CD4-positive, alpha-beta T cell (primary cell): ENCODE measurements at regions of chr6 and their contacts with region 1.

Region 1: GRCh38 chr6:34610819-34611477 is 54.8 kb upstream of the SPDEF start:
- DNase-seq: no peak
- ATAC-seq: no peak
- H3K4me3 ChIP-seq: no peak overlapping the region
- H3K4me3 Mint-ChIP-seq: no peak overlapping the region
- H3K27ac ChIP-seq: no peak overlapping the region
- H3K27ac Mint-ChIP-seq: no peak overlapping the region
- H3K4me1 ChIP-seq: peaks cover 2% of the 10 kb centered on the region
- H3K4me1 Mint-ChIP-seq: peaks cover 23% of the 10 kb centered on the region
- H3K27me3 ChIP-seq: no peaks in the 10 kb centered on the region
- H3K27me3 Mint-ChIP-seq: no peaks in the 10 kb centered on the region
- CTCF ChIP-seq: no peak

Region 2: GRCh38 chr6:34595332-34596184 is 15.4 kb before region 1 on chr6:
- CTCF ChIA-PET with region 1: interaction called, 10 read pairs
- POLR2A ChIA-PET with region 1: no interaction called
- intact Hi-C with region 1: no loop called
- DNase-seq: no peak
- ATAC-seq: no peak
- H3K4me3 ChIP-seq: no peak overlapping the region
- H3K4me3 Mint-ChIP-seq: no peak overlapping the region
- H3K27ac ChIP-seq: no peak overlapping the region
- H3K27ac Mint-ChIP-seq: peak overlapping the region; percentile 11
- H3K4me1 ChIP-seq: peaks cover 3% of the 10 kb centered on the region
- H3K4me1 Mint-ChIP-seq: peaks cover 78% of the 10 kb centered on the region
- H3K27me3 ChIP-seq: no peaks in the 10 kb centered on the region
- H3K27me3 Mint-ChIP-seq: no peaks in the 10 kb centered on the region
- CTCF ChIP-seq: no peak

Region 3: GRCh38 chr6:36139429-36139828 is 1528.5 kb after region 1 on chr6:
- CTCF ChIA-PET with region 1: no interaction called
- POLR2A ChIA-PET with region 1: no interaction called
- intact Hi-C with region 1: no loop called
- DNase-seq: peak in 2 of 14 experiments; percentile 20 to 43
- ATAC-seq: no peak
- H3K4me3 ChIP-seq: no peak overlapping the region
- H3K4me3 Mint-ChIP-seq: no peak overlapping the region
- H3K27ac ChIP-seq: no peak overlapping the region
- H3K27ac Mint-ChIP-seq: peak overlapping the region; percentile 36
- H3K4me1 ChIP-seq: peaks cover 15% of the 10 kb centered on the region
- H3K4me1 Mint-ChIP-seq: peaks cover 29% of the 10 kb centered on the region
- H3K27me3 ChIP-seq: no peaks in the 10 kb centered on the region
- H3K27me3 Mint-ChIP-seq: no peaks in the 10 kb centered on the region
- CTCF ChIP-seq: no peak